GM12878 (cell line): ENCODE measurements at regions of chr4 and their contacts with region 1.

Region 1: GRCh38 chr4:70863099-70863790 is 23.6 kb upstream of the GRSF1 start:
- DNase-seq: peak; percentile 52
- ATAC-seq: peak; percentile 88
- H3K4me3 ChIP-seq: no peak overlapping the region
- H3K27ac ChIP-seq: no peak overlapping the region
- H3K4me1 ChIP-seq: 0 out of 2 replicates have a peak, but pooled peaks cover 5% of the 10 kb centered on the region
- H3K27me3 ChIP-seq: no peaks in the 10 kb centered on the region
- CTCF ChIP-seq: no peak
- EP300 ChIP-seq: peak in 1 of 2 experiments; percentile 50; a peak in 1 of 4 replicates
- POLR2A ChIP-seq: no peak
- RAD21 ChIP-seq: no peak

Region 2: DNA sequence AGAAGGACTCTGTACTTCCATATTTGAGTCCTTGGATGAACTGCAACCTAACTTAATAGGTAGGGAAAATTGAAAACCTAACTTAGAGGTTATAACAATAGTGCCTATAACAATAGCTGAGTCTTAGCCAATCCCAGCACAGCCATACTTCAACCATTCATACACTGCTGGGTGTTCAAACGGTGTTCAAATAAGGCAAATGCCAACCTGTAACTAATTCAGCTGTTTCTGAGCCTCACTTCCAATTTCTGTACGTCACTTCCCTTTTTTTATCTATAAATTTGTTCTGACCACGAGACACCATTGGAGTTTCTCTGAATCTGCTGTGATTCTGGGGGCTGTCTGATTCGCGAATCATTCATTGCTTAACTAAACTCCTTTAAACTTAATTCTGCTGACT is 14.0 kb before region 1 on chr4:
- CTCF ChIA-PET with region 1: interaction called, 4 read pairs
- POLR2A ChIA-PET with region 1: interaction called, 6 read pairs
- RAD21 ChIA-PET with region 1: interaction called, 3 read pairs
- SMC1A ChIA-PET with region 1: interaction called, 14 read pairs
- in situ Hi-C with region 1: no loop called
- intact Hi-C with region 1: no loop called
- DNase-seq: no peak
- ATAC-seq: peak; percentile 62
- H3K4me3 ChIP-seq: no peak overlapping the region
- H3K27ac ChIP-seq: no peak overlapping the region
- H3K4me1 ChIP-seq: peaks cover 8% of the 10 kb centered on the region
- H3K27me3 ChIP-seq: no peaks in the 10 kb centered on the region
- CTCF ChIP-seq: no peak
- EP300 ChIP-seq: no peak
- POLR2A ChIP-seq: no peak
- RAD21 ChIP-seq: no peak